ENCODE measurements at regions of chr4 and their contacts with region 1.

Region 1: GRCh38 chr4:48963042-48963679 is 22.9 kb upstream of the CWH43 start:
- DNase-seq: peak; percentile 87 to 93 (median 90)
- H3K4me3 ChIP-seq: no peak overlapping the region
- H3K27ac ChIP-seq: no peak overlapping the region
- H3K4me1 ChIP-seq: peaks cover 0 to 4% (median 1%) of the 10 kb centered on the region in 4 experiments
- H3K27me3 ChIP-seq: no peaks in the 10 kb centered on the region

Region 2: GRCh38 chr4:48578132-48578968 is 384.8 kb before region 1 on chr4:
- CTCF ChIA-PET with region 1: interaction called, 11 read pairs
- POLR2A ChIA-PET with region 1: no interaction called
- DNase-seq: peak; percentile 69 to 82 (median 75)
- H3K4me3 ChIP-seq: no peak overlapping the region
- H3K27ac ChIP-seq: no peak overlapping the region
- H3K4me1 ChIP-seq: no peaks in the 10 kb centered on the region
- H3K27me3 ChIP-seq: no peaks in the 10 kb centered on the region

Region 3: DNA sequence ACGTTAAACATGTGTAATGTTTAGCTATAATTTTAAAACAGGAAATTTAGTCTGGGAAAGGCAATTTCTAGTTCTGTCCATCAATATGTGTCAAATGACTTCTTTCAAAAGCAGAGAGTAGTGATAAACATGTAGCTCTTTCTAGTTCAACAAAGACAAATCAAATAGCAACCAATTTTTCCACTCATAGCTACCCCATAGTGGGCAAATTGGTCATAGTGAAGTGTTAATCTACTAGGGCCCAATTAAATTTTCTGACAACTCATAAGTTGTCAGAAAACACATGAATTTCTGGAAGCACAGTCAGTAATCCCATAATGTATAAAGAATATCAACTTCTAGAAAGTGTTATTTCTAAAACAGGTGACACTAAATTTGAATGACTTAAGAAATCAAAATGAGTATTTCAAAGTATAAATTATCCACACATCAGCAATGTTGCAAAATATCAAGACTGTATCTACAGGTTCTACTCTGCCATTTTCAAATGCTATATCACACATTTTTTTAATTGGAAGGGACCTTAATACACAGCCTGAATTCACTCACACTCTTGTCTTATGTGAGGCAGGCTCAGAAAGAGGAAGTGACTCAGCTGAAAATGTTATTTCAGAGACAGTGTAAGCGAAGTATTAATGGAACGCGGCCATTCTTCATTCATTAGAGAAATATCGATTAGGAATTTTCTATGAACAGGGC is 64.3 kb before region 1 on chr4:
- CTCF ChIA-PET with region 1: no interaction called
- POLR2A ChIA-PET with region 1: no interaction called
- DNase-seq: peak; percentile 73 to 90 (median 87)
- H3K4me3 ChIP-seq: peak overlapping the region in 4 of 7 experiments; percentile 16 to 63 (median 26)
- H3K27ac ChIP-seq: peak overlapping the region; percentile 30 to 36
- H3K4me1 ChIP-seq: peaks cover 2 to 24% (median 17%) of the 10 kb centered on the region in 4 experiments
- H3K27me3 ChIP-seq: no peaks in the 10 kb centered on the region